Right cardiac atrium (tissue), 5 donors: ENCODE measurements at regions of chr16 and their contacts with region 1.

Region 1: DNA sequence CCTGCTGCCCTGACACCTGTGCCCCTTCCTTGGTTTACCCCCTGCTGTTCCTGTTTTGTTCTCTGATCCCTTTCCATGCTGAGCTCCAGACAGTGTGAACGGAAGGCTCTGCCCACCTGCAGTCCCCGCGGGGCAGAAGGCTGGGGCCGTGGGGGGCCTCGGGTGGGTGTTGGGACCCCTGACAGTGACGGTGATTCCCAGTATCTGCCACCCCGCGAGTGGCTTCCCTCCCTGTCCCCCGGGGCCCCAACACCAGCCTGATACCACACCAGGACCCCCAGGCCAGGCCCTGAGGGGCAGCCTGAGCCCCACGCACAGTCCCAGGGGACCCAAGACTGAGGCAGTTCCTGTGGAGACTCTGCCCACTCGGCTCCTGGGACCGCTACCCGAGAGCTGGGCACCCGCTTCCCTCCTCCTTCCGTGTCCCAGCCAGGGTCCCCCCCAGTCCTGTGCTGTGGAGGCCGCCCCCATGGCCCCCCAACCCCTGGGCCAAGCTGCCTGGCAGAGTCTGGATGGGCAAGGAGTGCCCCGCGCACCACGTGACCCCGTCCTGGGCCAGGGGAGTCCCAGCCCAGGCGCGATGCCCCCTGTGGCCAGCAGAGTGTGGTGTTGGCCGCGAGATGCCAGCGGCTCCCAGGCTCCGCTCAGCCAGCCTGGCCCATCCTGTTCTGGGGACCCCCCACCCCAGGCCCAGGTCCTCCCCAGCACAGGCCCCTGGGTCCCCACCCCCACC is 10.0 kb upstream of the C1QTNF8 start:
- DNase-seq: peak; percentile 62 to 86 (median 85)
- ATAC-seq: peak; percentile 53 to 70
- H3K4me3 ChIP-seq: no peak overlapping the region
- H3K27ac ChIP-seq: no peak overlapping the region
- H3K4me1 ChIP-seq: no peaks in the 10 kb centered on the region
- H3K27me3 ChIP-seq: no peaks in the 10 kb centered on the region

Region 2: GRCh38 chr16:1194665-1195392 is 88.8 kb after region 1 on chr16:
- intact Hi-C with region 1: loop called in 2 of 4 experiments (anchors 1 to 2 kb)
- DNase-seq: no peak
- ATAC-seq: peak; percentile 22 to 31
- H3K4me3 ChIP-seq: no peak overlapping the region
- H3K27ac ChIP-seq: no peak overlapping the region
- H3K4me1 ChIP-seq: no peaks in the 10 kb centered on the region
- H3K27me3 ChIP-seq: no peaks in the 10 kb centered on the region